ENCODE measurements at regions of chr13 and their contacts with region 1.

Region 1: GRCh38 chr13:52450012-52450792 is at the start of gene VPS36:
- DNase-seq: peak; percentile 97
- H3K4me3 ChIP-seq: peak within 1 kb of the TSS; percentile 62 to 73
- H3K27ac ChIP-seq: peak within 1 kb of the TSS; percentile 90 to 96
- H3K4me1 ChIP-seq: peaks cover 0 to 20% of the 10 kb centered on the region in 2 experiments; a peak in 2 of 4 replicates
- H3K27me3 ChIP-seq: no peaks in the 10 kb centered on the region
- CTCF ChIP-seq: peak; percentile 95
- EP300 ChIP-seq: no peak
- RAD21 ChIP-seq: peak; percentile 85
- polyA plus RNA-seq, gene VPS36: 9.9 and 14.5 TPM in 2 replicates

Region 2: DNA sequence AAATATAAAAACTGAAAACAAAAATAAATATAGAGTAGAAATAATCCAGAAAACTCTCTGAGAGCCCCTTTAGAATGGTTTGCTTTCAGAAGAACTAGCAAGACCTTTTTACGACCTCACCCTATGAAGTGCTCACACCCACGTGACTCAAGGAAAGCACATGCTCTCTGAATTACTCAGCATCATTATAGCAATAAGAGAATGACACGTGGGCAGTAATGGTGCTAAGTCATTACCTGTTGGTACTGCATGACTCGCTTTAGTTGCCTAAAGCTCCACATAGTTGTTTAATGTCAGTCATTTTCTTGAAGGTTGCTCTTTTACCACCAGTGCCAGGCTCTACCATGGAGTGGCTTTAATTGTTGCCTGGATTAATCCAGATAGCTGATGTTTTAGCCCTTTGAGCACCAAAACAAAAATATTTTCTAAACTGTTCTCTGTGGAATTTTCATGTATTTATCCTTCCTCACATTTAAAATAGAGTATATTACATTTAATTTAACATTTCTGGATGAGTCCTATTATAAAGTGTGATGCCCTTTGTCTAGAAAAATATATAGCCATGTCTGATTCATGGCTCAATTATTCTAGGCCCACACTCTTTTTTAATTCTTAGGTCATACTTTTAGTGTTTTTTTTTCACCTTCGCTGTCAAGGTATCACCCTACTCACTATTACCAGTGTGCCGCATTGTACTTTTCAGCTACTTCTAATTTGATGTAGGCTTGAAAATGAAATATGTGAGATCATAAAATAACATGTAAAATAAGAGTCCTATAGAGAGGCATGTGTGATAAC is 101.0 kb before region 1 on chr13:
- CTCF ChIA-PET with region 1: interaction called, 159 read pairs
- POLR2A ChIA-PET with region 1: no interaction called
- DNase-seq: no peak
- H3K4me3 ChIP-seq: no peak overlapping the region
- H3K27ac ChIP-seq: peak overlapping the region; percentile 48 to 82; a peak in 3 of 4 replicates
- H3K4me1 ChIP-seq: peaks cover 3 to 27% of the 10 kb centered on the region in 2 experiments
- H3K27me3 ChIP-seq: no peaks in the 10 kb centered on the region
- CTCF ChIP-seq: no peak
- EP300 ChIP-seq: no peak
- RAD21 ChIP-seq: no peak

Region 3: GRCh38 chr13:52374848-52375411 is 75.3 kb before region 1 on chr13:
- CTCF ChIA-PET with region 1: interaction called, 14 read pairs
- POLR2A ChIA-PET with region 1: no interaction called
- DNase-seq: no peak
- H3K4me3 ChIP-seq: no peak overlapping the region
- H3K27ac ChIP-seq: no peak overlapping the region
- H3K4me1 ChIP-seq: no peaks in the 10 kb centered on the region; a peak in 1 of 4 replicates
- H3K27me3 ChIP-seq: no peaks in the 10 kb centered on the region
- CTCF ChIP-seq: no peak
- EP300 ChIP-seq: no peak
- RAD21 ChIP-seq: no peak

Region 4: DNA sequence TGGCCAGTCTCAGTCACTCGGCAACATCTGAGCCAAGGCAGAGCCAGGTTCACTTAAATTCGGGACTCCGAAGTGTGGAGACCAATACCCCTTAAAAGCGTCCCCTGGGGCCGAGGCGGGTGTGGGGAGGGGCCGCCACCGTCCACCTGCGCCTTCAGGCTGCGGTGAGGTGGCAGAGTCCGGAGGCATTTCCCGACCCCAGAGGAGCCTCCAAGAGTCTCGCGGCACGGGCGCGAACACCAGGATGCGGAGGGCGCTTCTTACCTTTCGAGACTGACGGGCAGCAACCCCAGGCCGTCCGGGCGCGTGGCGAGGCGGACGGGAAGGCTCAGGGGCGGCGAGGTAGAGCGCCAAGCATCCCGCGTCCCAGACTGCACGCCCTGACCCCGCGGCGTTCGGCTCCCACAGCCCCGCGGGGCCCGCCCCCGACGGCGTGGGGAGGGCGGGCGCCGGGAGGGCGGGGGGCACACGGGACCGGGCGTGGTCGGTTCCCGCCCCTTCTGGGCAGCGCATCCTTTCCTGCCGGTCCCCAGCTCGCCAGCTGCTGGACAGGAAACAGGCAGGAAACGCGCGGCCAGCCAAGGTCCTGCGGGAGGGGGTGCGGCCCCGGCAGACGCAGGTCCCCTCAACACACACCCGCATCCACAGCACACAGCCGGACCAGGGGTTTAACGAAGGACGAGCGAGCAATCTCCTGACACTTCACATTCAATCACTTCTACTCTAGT is 44.3 kb before region 1 on chr13 and contains the start of gene THSD1:
- CTCF ChIA-PET with region 1: interaction called, 18 read pairs
- POLR2A ChIA-PET with region 1: interaction called, 4 read pairs
- DNase-seq: peak; percentile 87
- H3K4me3 ChIP-seq: peak within 1 kb of the TSS; percentile 76 to 85
- H3K27ac ChIP-seq: no peak within 1 kb of the TSS
- H3K4me1 ChIP-seq: peaks cover 0 to 5% of the 10 kb centered on the region in 2 experiments; a peak in 1 of 4 replicates
- H3K27me3 ChIP-seq: no peaks in the 10 kb centered on the region
- CTCF ChIP-seq: no peak
- EP300 ChIP-seq: no peak
- RAD21 ChIP-seq: no peak
- polyA plus RNA-seq, gene THSD1: 8.9 and 10.1 TPM in 2 replicates

Region 5: GRCh38 chr13:52411629-52412028 is 38.6 kb before region 1 on chr13:
- CTCF ChIA-PET with region 1: interaction called, 18 read pairs
- POLR2A ChIA-PET with region 1: interaction called, 4 read pairs
- DNase-seq: no peak
- H3K4me3 ChIP-seq: no peak overlapping the region
- H3K27ac ChIP-seq: peak overlapping the region in 1 of 2 experiments; percentile 52; a peak in 2 of 4 replicates
- H3K4me1 ChIP-seq: peaks cover 0 to 20% of the 10 kb centered on the region in 2 experiments; a peak in 2 of 4 replicates
- H3K27me3 ChIP-seq: no peaks in the 10 kb centered on the region
- CTCF ChIP-seq: no peak
- EP300 ChIP-seq: no peak
- RAD21 ChIP-seq: no peak

Region 6: DNA sequence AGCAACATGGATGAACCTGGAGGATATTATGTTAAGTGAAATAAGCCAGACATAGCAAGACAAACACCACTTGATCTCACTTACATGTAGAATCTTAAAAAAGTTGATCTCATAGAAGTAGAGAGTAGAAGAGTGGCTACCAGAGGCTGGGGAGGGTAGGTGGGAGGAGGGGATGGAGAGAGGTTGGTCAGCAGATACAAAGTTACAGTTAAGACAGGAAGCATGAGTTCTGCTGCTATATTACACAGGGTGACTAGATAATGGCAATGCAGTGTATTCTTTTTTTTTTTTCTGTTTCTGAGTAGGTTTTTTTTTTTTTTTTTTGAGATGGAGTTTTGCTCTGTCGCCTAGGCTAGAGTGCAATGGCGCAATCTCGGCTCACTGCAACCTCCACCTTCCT is 29.0 kb before region 1 on chr13:
- CTCF ChIA-PET with region 1: interaction called, 23 read pairs
- POLR2A ChIA-PET with region 1: interaction called, 3 read pairs
- DNase-seq: no peak
- H3K4me3 ChIP-seq: no peak overlapping the region
- H3K27ac ChIP-seq: no peak overlapping the region
- H3K4me1 ChIP-seq: peaks cover 0 to under 1% of the 10 kb centered on the region in 2 experiments; a peak in 1 of 4 replicates
- H3K27me3 ChIP-seq: no peaks in the 10 kb centered on the region
- CTCF ChIP-seq: no peak
- EP300 ChIP-seq: no peak
- RAD21 ChIP-seq: no peak

Region 7: DNA sequence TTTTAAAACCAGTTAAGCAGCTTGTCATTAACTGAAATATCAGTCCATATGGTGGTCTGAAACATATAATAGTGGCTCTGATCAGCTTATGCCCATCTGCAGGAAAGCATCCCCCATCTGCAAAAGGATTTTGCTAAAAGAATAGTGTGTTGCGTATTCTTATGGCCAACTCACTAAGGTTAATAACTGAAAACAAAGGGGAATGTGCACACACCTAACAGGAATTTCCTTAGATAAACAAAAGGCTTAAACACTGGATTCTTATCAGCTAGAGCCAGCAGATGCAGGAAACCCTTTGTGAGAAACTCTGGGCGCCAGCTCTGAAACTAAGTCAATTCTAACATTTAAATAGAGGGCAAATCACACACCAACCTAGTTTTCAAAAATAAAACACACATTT is 21.9 kb before region 1 on chr13:
- CTCF ChIA-PET with region 1: interaction called, 23 read pairs
- POLR2A ChIA-PET with region 1: interaction called, 3 read pairs
- DNase-seq: peak; percentile 33
- H3K4me3 ChIP-seq: no peak overlapping the region
- H3K27ac ChIP-seq: peak overlapping the region; percentile 27 to 44; a peak in 2 of 4 replicates
- H3K4me1 ChIP-seq: peaks cover 3 to 4% of the 10 kb centered on the region in 2 experiments; a peak in 2 of 4 replicates
- H3K27me3 ChIP-seq: no peaks in the 10 kb centered on the region
- CTCF ChIP-seq: no peak
- EP300 ChIP-seq: no peak
- RAD21 ChIP-seq: no peak

Region 8: GRCh38 chr13:53010374-53011105 is 560.3 kb after region 1 on chr13:
- CTCF ChIA-PET with region 1: no interaction called
- POLR2A ChIA-PET with region 1: no interaction called
- DNase-seq: no peak
- H3K4me3 ChIP-seq: no peak overlapping the region
- H3K27ac ChIP-seq: no peak overlapping the region
- H3K4me1 ChIP-seq: peaks cover 0 to 8% of the 10 kb centered on the region in 2 experiments; a peak in 2 of 4 replicates
- H3K27me3 ChIP-seq: no peaks in the 10 kb centered on the region
- CTCF ChIP-seq: no peak
- EP300 ChIP-seq: no peak
- RAD21 ChIP-seq: no peak

Measured in SK-N-SH (cell line).